A549 (cell line): ENCODE measurements at regions of chr12 and their contacts with region 1.

Region 1: GRCh38 chr12:49707128-49707811 is at the start of gene FMNL3:
- DNase-seq: peak; percentile 93 to 95
- ATAC-seq: peak; percentile 95 to 97
- H3K4me3 ChIP-seq: peak within 1 kb of the TSS; percentile 52
- H3K27ac ChIP-seq: peak within 1 kb of the TSS; percentile 58 to 93
- H3K4me1 ChIP-seq: 0 out of 3 replicates have a peak, but pooled peaks cover 3% of the 10 kb centered on the region
- CTCF ChIP-seq: peak; percentile 96
- EP300 ChIP-seq: no peak
- POLR2A ChIP-seq: peak; percentile 35; the same call in 1 of the 2 replicates
- RAD21 ChIP-seq: peak; percentile 84 to 91
- polyA plus RNA-seq, gene FMNL3: 1.7 TPM in 2 replicates

Region 2: GRCh38 chr12:49567611-49568441 is 139.4 kb before region 1 on chr12 and contains the start of gene MCRS1:
- CTCF ChIA-PET with region 1: no interaction called
- POLR2A ChIA-PET with region 1: no interaction called
- DNase-seq: peak; percentile 94 to 99
- ATAC-seq: peak; percentile 89 to 90
- H3K4me3 ChIP-seq: peak within 1 kb of the TSS; percentile 65
- H3K27ac ChIP-seq: peak within 1 kb of the TSS; percentile 95 to 99
- H3K4me1 ChIP-seq: peaks cover 13% of the 10 kb centered on the region
- CTCF ChIP-seq: no peak
- EP300 ChIP-seq: no peak
- POLR2A ChIP-seq: peak; percentile 63
- RAD21 ChIP-seq: no peak
- polyA plus RNA-seq, gene MCRS1: 68.5 and 69.4 TPM in 2 replicates

Region 3: DNA sequence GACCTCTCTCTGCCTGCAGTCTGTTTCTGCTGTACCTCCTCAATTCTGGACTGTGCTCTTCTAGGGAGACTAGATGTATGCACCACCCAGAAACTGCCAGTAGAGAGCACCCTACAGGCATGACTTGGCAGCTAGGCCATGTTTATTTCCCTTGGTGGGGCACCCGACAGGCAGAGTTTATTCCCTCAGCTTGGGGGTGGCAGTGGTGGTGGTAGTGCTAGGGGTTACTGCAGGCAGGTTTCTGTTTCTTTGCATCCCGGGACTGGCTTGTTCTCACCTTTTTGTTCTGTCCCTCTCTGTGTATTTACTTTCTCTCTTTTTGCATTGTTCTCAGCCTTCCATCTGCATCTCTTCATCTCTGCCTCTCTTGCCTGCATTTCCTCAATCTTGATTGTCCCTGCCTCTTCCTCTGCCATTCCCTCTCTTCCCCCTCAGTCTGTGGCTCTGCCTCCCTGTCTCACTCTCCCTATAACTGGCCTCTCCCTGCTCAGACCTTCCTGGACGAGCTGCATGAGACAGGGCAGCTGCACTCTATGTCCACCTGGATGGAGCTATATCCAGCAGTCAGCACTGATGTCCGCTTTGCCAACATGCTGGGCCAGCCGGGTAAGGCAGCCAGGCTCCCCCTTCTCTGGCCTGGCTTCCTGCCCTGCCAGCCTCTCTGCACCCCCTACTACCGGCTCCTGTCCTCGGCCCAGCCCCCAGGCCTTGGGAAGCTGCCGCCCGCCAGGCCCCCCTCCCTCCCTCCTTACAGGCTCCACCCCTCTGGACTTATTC is 70.1 kb before region 1 on chr12:
- CTCF ChIA-PET with region 1: interaction called, 260 read pairs
- POLR2A ChIA-PET with region 1: no interaction called
- DNase-seq: peak; percentile 67 to 81
- ATAC-seq: peak; percentile 82 to 96
- H3K4me3 ChIP-seq: no peak overlapping the region
- H3K27ac ChIP-seq: peak overlapping the region in 1 of 2 experiments; percentile 40; a peak in 2 of 6 replicates
- H3K4me1 ChIP-seq: no peaks in the 10 kb centered on the region
- CTCF ChIP-seq: peak; percentile 47
- EP300 ChIP-seq: no peak
- POLR2A ChIP-seq: no peak
- RAD21 ChIP-seq: peak; percentile 36 to 66; a peak in 3 of 5 replicates

Region 4: DNA sequence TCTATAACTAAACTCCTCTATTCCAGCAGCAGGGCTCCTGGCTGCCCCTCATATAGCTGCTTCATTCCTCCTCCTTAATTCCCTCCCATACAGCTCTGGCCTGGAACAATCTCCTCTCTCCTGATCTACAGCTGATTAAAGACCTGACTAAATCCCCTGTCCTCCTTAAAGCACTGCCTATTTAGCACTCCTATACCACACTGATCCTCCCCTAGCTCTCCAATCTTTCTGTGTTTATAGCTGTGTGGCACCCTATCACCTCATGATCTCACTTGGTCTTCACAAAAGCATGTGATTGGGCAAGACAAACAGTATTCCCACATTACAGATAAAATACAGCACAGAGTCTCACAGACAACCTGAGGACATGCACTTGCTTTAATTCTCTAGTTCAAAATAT is 17.5 kb before region 1 on chr12:
- CTCF ChIA-PET with region 1: interaction called, 11 read pairs
- POLR2A ChIA-PET with region 1: no interaction called
- DNase-seq: no peak
- ATAC-seq: no peak
- H3K4me3 ChIP-seq: no peak overlapping the region
- H3K27ac ChIP-seq: no peak overlapping the region
- H3K4me1 ChIP-seq: no peaks in the 10 kb centered on the region
- CTCF ChIP-seq: no peak
- EP300 ChIP-seq: no peak
- POLR2A ChIP-seq: no peak
- RAD21 ChIP-seq: no peak

Region 5: GRCh38 chr12:49720214-49720613 is 12.9 kb after region 1 on chr12:
- CTCF ChIA-PET with region 1: interaction called, 16 read pairs
- POLR2A ChIA-PET with region 1: no interaction called
- DNase-seq: no peak
- ATAC-seq: peak; percentile 66 to 77; a peak in 5 of 6 replicates
- H3K4me3 ChIP-seq: no peak overlapping the region
- H3K27ac ChIP-seq: no peak overlapping the region
- H3K4me1 ChIP-seq: no peaks in the 10 kb centered on the region
- CTCF ChIP-seq: no peak
- EP300 ChIP-seq: no peak
- POLR2A ChIP-seq: no peak
- RAD21 ChIP-seq: peak in 1 of 2 experiments; percentile 9; a peak in 1 of 5 replicates